Mammary epithelial cell (primary cell): ENCODE measurements at regions of chr3 and their contacts with region 1.

Region 1: GRCh38 chr3:1235526-1236120 is 142.8 kb downstream of the CNTN6 start:
- DNase-seq: no peak
- H3K4me3 ChIP-seq: no peak overlapping the region
- H3K27ac ChIP-seq: no peak overlapping the region
- H3K4me1 ChIP-seq: no peaks in the 10 kb centered on the region
- H3K27me3 ChIP-seq: no peaks in the 10 kb centered on the region
- CTCF ChIP-seq: no peak

Region 2: DNA sequence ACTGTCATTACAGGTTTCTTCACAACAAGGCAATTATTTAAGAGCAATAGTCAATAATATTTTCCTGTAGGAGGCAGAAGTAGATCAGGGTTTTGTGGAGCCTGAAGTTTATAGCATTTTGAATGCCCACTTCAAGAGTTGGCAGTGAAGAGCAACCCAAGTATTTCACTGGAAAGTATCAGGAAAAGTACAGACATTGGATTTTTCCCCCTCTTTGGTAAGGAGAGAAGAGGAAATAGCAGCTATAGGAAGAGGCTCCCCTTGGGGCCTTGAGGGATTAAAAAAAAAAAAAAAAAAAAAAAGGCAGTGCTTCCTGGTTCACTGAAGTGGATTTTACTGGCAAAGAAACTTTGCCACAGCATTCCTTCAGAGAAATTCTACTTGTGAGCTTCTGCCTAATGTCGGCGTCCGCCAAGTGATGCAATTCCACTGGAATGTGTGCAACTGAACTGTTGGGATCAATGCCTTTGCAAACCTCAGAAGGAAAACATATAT is 148.5 kb before region 1 on chr3:
- CTCF ChIA-PET with region 1: interaction called, 14 read pairs
- dilution Hi-C with region 1: no loop called
- in situ Hi-C with region 1: no loop called
- intact Hi-C with region 1: no loop called
- DNase-seq: peak; percentile 33
- H3K4me3 ChIP-seq: no peak overlapping the region
- H3K27ac ChIP-seq: no peak overlapping the region
- H3K4me1 ChIP-seq: no peaks in the 10 kb centered on the region
- H3K27me3 ChIP-seq: no peaks in the 10 kb centered on the region
- CTCF ChIP-seq: peak; percentile 12 to 39

Region 3: GRCh38 chr3:1139071-1139470 is 96.6 kb before region 1 on chr3:
- CTCF ChIA-PET with region 1: no interaction called
- dilution Hi-C with region 1: no loop called
- in situ Hi-C with region 1: no loop called
- intact Hi-C with region 1: no loop called
- DNase-seq: no peak
- H3K4me3 ChIP-seq: no peak overlapping the region
- H3K27ac ChIP-seq: no peak overlapping the region
- H3K4me1 ChIP-seq: no peaks in the 10 kb centered on the region
- H3K27me3 ChIP-seq: no peaks in the 10 kb centered on the region
- CTCF ChIP-seq: no peak